Activated CD4-positive, alpha-beta T cell treated with anti-CD3 and anti-CD28 coated beads, Interleukin-2, amount 10 ng/mL, durations not matched to agents 24 days and 14 days (primary cell): ENCODE measurements at regions of chr6 and their contacts with region 1.

Region 1: GRCh38 chr6:125790358-125791150 is at the start of gene NCOA7:
- DNase-seq: peak; percentile 95
- H3K4me3 Mint-ChIP-seq: peak within 1 kb of the TSS; percentile 96
- H3K27ac Mint-ChIP-seq: peak within 1 kb of the TSS; percentile 99
- H3K4me1 Mint-ChIP-seq: peaks cover 49% of the 10 kb centered on the region
- H3K27me3 Mint-ChIP-seq: no peaks in the 10 kb centered on the region
- total RNA-seq, gene NCOA7: 52.5 and 53.7 TPM in 2 replicates

Region 2: DNA sequence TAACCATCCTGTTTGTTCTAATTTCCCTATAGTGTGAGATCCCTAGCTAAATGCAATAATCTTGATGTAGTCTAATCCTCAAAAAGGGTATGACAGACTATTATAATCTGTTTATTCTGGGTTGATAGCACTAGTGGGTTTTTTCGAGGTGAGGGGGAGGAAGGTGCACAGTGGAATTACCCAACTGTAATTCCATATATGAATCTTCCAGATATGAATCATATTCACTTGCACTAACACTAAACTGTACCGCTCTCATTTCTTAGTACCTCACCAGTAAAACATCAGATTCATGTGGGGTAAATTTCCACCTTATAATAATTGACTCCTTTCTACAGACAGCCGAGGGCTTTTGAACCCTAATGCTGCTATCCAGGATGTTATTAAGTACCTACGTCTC is 16.7 kb after region 1 on chr6:
- intact Hi-C with region 1: loop called (anchors 1 kb)
- DNase-seq: peak; percentile 50
- H3K4me3 Mint-ChIP-seq: peak overlapping the region; percentile 46
- H3K27ac Mint-ChIP-seq: peak overlapping the region; percentile 79
- H3K4me1 Mint-ChIP-seq: peaks cover 63% of the 10 kb centered on the region
- H3K27me3 Mint-ChIP-seq: no peaks in the 10 kb centered on the region

Region 3: GRCh38 chr6:125850361-125850760 is 59.8 kb after region 1 on chr6:
- intact Hi-C with region 1: loop called (anchors 2 kb)
- DNase-seq: no peak
- H3K4me3 Mint-ChIP-seq: no peak overlapping the region
- H3K27ac Mint-ChIP-seq: no peak overlapping the region
- H3K4me1 Mint-ChIP-seq: peaks cover 4% of the 10 kb centered on the region
- H3K27me3 Mint-ChIP-seq: no peaks in the 10 kb centered on the region

Region 4: GRCh38 chr6:125910527-125910926 is 120.0 kb after region 1 on chr6:
- intact Hi-C with region 1: loop called (anchors 1 kb)
- DNase-seq: peak; percentile 67
- H3K4me3 Mint-ChIP-seq: peak overlapping the region; percentile 17
- H3K27ac Mint-ChIP-seq: peak overlapping the region; percentile 78
- H3K4me1 Mint-ChIP-seq: peaks cover 27% of the 10 kb centered on the region
- H3K27me3 Mint-ChIP-seq: no peaks in the 10 kb centered on the region

Region 5: DNA sequence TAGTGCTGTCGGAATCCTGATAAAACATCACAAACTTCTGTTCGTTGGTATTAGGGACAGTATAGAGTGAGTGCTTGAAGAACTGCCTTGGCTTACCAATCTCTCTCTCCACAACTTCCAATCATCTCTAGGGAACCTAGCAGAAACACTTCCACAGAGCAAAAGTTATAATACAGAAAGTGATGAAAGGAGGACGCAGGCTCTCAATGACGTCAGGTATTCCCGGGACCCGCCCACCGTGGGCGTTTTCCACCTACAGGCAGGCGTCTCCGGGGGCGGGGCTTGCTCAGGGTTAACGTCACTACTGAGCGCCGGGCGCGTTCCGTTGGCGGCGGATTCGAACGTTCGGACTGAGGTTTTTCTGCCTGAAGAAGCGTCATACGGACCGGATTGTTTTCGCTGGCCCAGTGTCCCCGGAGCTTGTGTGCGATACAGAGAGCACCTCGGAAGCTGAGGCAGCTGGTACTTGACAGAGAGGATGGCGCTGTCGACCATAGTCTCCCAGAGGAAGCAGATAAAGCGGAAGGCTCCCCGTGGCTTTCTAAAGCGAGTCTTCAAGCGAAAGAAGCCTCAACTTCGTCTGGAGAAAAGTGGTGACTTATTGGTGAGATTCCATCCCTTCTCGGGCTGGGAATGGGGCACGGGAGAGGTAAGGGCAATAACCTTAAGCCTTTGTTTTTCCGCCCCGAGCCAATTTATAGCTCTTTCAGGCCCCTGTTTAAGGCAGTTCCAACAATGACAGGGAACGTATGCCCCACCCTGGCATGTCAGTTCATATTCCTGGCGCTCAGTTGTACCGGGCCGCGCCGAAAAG is 549.4 kb after region 1 on chr6 and contains the start of gene CENPW:
- intact Hi-C with region 1: loop called (anchors 2 kb)
- DNase-seq: peak; percentile 99
- H3K4me3 Mint-ChIP-seq: no peak within 1 kb of the TSS
- H3K27ac Mint-ChIP-seq: no peak within 1 kb of the TSS
- H3K4me1 Mint-ChIP-seq: peaks cover 26% of the 10 kb centered on the region
- H3K27me3 Mint-ChIP-seq: no peaks in the 10 kb centered on the region
- total RNA-seq, gene CENPW: 42.7 and 45.8 TPM in 2 replicates